ENCODE measurements at regions of chr18 and their contacts with region 1.

Region 1: DNA sequence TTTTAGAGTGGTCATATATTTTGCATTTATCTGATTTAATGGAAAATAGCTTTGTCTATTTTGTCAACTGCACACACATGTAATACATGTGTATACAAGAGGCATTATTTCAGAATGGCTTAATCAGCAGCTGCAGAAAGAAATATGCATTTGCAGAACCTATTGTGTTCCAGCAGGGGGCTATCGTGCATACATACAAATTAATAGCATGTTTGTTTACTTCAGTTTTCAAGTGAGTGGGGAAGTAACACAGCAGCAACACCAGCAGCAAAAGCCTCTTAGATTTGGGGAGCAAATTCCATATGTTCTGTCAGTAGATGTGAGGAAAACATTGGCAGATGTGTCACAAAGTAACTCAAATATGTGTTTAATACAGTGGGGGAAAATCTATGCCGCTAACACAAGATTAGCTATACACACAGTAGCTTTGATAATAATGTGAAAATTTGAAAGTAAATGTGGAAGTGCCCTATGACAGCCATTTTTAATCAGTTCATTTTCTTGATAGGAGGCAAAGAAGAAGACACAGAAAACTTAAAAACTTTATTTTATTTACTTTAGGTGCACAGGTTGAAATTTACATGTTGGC is 218.1 kb downstream of the WDR7 start:
- DNase-seq: peak; percentile 52
- H3K4me3 Mint-ChIP-seq: no peak overlapping the region
- H3K27ac Mint-ChIP-seq: no peak overlapping the region
- H3K4me1 Mint-ChIP-seq: peaks cover 6% of the 10 kb centered on the region
- H3K27me3 Mint-ChIP-seq: no peaks in the 10 kb centered on the region
- CTCF ChIP-seq: peak; percentile 83

Region 2: DNA sequence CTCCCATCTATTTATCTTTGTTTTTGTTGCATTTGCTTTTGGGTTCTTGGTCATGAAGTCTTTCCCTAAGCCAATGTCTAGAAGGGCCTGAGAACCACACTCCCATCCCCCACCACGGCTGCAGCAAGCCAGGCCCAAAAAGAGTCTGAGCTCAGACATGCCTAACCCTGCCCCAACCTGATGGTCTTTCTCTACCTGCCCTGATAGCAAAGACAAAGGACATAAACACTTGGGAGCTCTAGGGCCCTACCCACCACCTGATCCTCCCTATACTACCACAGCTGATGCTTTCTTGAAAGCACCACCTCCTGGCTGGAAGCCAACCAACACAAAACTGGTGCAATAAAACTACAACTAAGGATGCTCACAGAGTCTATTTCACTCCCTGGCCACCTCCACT is 15.2 kb after region 1 on chr18:
- CTCF ChIA-PET with region 1: interaction called, 13 read pairs
- POLR2A ChIA-PET with region 1: interaction called, 3 read pairs
- intact Hi-C with region 1: no loop called
- DNase-seq: no peak
- H3K4me3 Mint-ChIP-seq: no peak overlapping the region
- H3K27ac Mint-ChIP-seq: no peak overlapping the region
- H3K4me1 Mint-ChIP-seq: no peaks in the 10 kb centered on the region
- H3K27me3 Mint-ChIP-seq: no peaks in the 10 kb centered on the region
- CTCF ChIP-seq: no peak

Region 3: GRCh38 chr18:57004366-57005121 is 135.3 kb after region 1 on chr18:
- CTCF ChIA-PET with region 1: interaction called, 4 read pairs
- POLR2A ChIA-PET with region 1: no interaction called
- intact Hi-C with region 1: loop called (anchors 10 kb)
- DNase-seq: peak; percentile 57
- H3K4me3 Mint-ChIP-seq: no peak overlapping the region
- H3K27ac Mint-ChIP-seq: peak overlapping the region; percentile 72
- H3K4me1 Mint-ChIP-seq: no peaks in the 10 kb centered on the region
- H3K27me3 Mint-ChIP-seq: no peaks in the 10 kb centered on the region
- CTCF ChIP-seq: no peak

Region 4: DNA sequence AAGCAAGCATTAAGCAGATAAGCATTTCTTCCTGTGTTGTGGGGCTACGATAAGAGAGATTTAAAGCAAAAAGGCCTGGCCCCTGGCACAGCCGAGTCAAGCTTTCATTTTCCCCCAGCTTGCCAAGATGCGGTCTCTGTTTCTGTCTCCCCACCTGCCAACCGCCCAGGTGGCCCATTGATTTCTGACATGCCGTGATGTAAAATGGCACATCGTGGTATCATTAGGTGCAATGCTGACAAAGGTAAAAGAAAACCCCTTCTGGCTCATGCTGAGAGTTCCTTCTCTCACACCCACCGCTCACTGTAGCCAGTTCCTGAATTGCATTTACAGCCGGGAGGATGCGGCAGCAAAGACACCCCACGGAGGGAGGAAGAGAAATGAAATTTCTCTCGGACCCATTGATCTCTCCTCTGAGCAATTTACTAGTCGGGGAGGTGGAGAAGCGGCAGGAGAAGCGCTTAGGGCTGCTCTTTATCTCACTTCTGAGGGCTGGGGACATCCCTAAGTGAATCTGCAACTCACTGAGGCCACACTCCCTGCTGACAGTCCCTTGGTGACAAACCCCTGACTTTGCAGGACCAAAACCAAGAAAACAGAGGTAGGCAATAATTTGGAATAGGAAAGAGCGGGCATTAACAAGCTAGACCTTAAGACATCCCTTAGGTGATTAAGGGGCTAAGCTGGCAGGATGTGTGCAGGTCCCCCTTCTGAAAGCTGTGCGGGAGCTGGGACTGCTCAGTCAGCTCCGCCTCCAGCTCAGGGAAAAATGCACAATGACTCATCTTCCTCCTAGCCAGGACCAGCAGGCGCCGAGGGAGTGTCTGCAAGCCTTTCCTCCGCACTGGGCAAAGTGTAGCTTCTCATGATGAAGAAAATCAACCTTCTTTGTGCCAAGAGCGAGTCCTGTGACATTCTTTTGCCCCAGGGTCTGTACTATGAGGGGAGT is 340.7 kb after region 1 on chr18:
- CTCF ChIA-PET with region 1: no interaction called
- POLR2A ChIA-PET with region 1: no interaction called
- intact Hi-C with region 1: loop called (anchors 10 kb)
- DNase-seq: peak; percentile 83
- H3K4me3 Mint-ChIP-seq: no peak overlapping the region
- H3K27ac Mint-ChIP-seq: no peak overlapping the region
- H3K4me1 Mint-ChIP-seq: peaks cover 26% of the 10 kb centered on the region
- H3K27me3 Mint-ChIP-seq: no peaks in the 10 kb centered on the region
- CTCF ChIP-seq: no peak

Region 5: DNA sequence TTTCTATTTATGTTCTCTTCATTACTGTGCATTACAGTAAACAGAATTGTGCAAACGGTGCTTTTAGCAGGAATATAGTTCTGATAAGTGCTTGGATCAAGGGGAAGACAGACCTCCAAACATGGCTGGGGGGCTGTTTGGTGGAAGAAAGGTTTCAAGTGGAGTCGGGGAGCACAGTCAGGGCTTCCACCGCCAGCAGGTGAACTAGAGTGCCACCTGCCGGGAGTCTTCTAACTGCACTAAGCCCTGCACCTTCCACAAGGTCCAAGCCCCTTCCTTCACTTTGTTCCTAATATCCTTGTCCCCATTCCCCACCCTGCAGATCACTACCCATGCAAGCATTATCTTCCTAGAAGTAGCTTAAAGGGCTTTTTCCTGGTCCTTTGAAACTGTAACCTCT is 577.0 kb after region 1 on chr18:
- CTCF ChIA-PET with region 1: interaction called, 38 read pairs
- POLR2A ChIA-PET with region 1: no interaction called
- intact Hi-C with region 1: loop called (anchors 1 kb)
- DNase-seq: peak; percentile 45
- H3K4me3 Mint-ChIP-seq: no peak overlapping the region
- H3K27ac Mint-ChIP-seq: no peak overlapping the region
- H3K4me1 Mint-ChIP-seq: peaks cover 10% of the 10 kb centered on the region
- H3K27me3 Mint-ChIP-seq: peaks cover 67% of the 10 kb centered on the region
- CTCF ChIP-seq: peak; percentile 77

Region 6: GRCh38 chr18:57561728-57562423 is 692.6 kb after region 1 on chr18:
- CTCF ChIA-PET with region 1: interaction called, 34 read pairs
- POLR2A ChIA-PET with region 1: no interaction called
- intact Hi-C with region 1: loop called (anchors 1 kb)
- DNase-seq: peak; percentile 58
- H3K4me3 Mint-ChIP-seq: no peak overlapping the region
- H3K27ac Mint-ChIP-seq: no peak overlapping the region
- H3K4me1 Mint-ChIP-seq: peaks cover 6% of the 10 kb centered on the region
- H3K27me3 Mint-ChIP-seq: no peaks in the 10 kb centered on the region
- CTCF ChIP-seq: peak; percentile 75

Measured in MCF 10A (cell line).